ENCODE measurements at regions of chrX and their contacts with region 1.

Region 1: DNA sequence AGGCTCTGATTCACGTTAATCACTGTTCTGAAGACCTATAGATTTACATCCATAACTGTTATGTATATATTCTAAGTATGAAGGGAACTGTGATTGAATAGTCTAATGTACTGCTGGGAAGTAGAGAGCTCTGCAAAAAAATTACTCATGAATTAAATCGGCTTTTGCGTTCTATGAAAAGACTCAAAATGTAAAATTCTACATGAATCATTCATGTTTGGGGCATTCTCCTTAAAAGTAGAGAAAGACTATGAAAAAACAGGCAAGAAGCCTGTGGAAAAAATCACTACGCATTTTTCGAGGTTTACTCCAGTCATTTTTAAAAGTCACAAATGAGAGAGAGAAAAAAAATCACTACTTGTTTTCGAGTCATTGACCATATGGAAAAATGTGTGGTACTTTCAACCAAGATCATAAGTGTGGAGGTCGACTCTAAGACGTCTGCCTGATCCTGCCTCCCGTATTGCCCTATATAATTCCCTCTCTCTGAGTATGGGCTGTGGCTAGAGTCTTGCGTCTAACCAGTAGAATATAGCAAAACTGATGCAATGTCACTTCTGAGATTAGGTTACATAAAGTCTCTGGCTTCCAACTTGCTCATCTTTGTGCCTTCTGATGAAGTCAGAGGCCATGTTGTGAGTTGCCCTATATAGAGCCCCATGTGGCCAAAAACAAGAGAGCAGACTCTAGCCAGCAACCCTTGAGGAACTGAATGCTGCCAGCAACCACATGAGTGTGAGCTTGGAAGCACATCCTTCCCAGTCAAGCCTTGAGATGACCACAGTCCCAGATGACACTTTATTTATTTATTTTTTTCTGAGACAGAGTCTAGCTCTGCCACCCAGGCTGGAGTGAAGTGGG is 32.1 kb upstream of the VEGFD start:
- DNase-seq: no peak
- ATAC-seq: no peak
- H3K4me3 ChIP-seq: no peak overlapping the region
- H3K27ac ChIP-seq: no peak overlapping the region
- H3K4me1 ChIP-seq: 0 out of 2 replicates have a peak, but pooled peaks cover 2% of the 10 kb centered on the region
- H3K27me3 ChIP-seq: peaks cover 3% of the 10 kb centered on the region; the same call in 1 of the 2 replicates
- CTCF ChIP-seq: no peak
- POLR2A ChIP-seq: no peak
- RAD21 ChIP-seq: no peak

Region 2: GRCh38 chrX:15087747-15088146 is 328.6 kb before region 1 on chrX:
- CTCF ChIA-PET with region 1: no interaction called
- POLR2A ChIA-PET with region 1: no interaction called
- dilution Hi-C with region 1: no loop called
- in situ Hi-C with region 1: no loop called
- intact Hi-C with region 1: no loop called
- DNase-seq: no peak
- ATAC-seq: no peak
- H3K4me3 ChIP-seq: no peak overlapping the region
- H3K27ac ChIP-seq: no peak overlapping the region
- H3K4me1 ChIP-seq: no peaks in the 10 kb centered on the region
- H3K27me3 ChIP-seq: no peaks in the 10 kb centered on the region
- CTCF ChIP-seq: no peak
- POLR2A ChIP-seq: no peak
- RAD21 ChIP-seq: no peak

Region 3: DNA sequence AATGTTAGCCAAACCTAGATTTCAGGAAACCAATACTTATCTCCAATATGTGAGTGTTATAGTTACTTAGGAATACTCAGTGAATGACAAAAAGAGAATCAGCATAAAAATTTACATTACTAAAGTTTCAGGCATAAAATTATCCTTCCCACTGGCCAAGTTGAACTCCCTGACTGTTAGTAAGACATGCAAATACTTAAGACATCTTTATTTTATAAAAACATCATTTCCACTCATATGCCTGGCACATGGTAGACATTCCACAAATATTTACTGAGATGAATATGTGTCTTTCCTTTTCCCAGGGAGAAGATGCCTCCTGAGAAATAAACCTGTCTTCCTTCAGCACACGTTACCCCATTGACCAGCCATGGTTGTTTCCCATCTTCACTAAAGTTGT is 39.4 kb before region 1 on chrX:
- CTCF ChIA-PET with region 1: no interaction called
- POLR2A ChIA-PET with region 1: no interaction called
- dilution Hi-C with region 1: no loop called
- in situ Hi-C with region 1: no loop called
- intact Hi-C with region 1: no loop called
- DNase-seq: peak; percentile 25
- ATAC-seq: peak; percentile 64
- H3K4me3 ChIP-seq: no peak overlapping the region
- H3K27ac ChIP-seq: no peak overlapping the region
- H3K4me1 ChIP-seq: peaks cover 1% of the 10 kb centered on the region; the same call in 1 of the 2 replicates
- H3K27me3 ChIP-seq: no peaks in the 10 kb centered on the region; the same call in 1 of the 2 replicates
- CTCF ChIP-seq: no peak
- POLR2A ChIP-seq: no peak
- RAD21 ChIP-seq: no peak

Region 4: DNA sequence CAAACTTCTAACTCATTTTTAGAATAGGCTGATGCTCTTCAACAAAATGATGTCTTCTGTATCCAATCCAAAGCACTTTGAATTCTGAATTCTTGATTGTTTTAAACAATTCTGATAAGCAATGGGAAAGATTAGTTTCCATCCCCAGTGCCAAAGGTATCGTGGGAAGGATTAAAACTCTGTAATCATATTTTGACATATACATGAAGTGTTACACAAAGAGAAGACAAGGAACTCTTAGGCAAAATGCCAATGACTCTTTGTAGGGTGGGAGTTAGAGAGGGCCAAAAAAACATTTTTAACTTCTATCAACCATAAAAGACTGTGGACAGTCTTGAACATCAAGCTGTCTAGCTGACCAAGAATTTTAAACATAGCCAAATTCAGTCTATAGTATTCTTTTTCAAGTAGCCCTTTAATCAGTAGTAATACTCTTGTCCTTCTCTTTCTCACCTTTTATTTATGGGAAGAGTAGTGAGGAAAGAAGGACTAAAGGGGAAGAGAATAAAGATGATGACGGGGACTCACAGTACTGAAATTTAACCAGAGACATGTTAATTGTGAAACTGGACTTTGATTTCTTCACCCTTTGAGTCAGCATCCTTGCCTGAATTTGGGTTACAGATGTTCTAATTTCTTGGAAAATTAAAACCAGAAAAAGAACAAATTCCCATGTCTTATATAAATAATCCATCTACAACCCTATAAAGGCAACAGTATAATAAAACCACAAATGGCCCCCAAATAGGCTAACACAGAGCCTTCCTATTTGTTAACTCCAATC is 19.7 kb after region 1 on chrX:
- CTCF ChIA-PET with region 1: interaction called, 3 read pairs
- POLR2A ChIA-PET with region 1: interaction called, 12 read pairs
- dilution Hi-C with region 1: no loop called
- in situ Hi-C with region 1: no loop called
- intact Hi-C with region 1: no loop called
- DNase-seq: peak; percentile 11
- ATAC-seq: no peak
- H3K4me3 ChIP-seq: no peak overlapping the region
- H3K27ac ChIP-seq: no peak overlapping the region
- H3K4me1 ChIP-seq: no peaks in the 10 kb centered on the region
- H3K27me3 ChIP-seq: no peaks in the 10 kb centered on the region; the same call in 1 of the 2 replicates
- CTCF ChIP-seq: no peak
- POLR2A ChIP-seq: no peak
- RAD21 ChIP-seq: no peak

Region 5: DNA sequence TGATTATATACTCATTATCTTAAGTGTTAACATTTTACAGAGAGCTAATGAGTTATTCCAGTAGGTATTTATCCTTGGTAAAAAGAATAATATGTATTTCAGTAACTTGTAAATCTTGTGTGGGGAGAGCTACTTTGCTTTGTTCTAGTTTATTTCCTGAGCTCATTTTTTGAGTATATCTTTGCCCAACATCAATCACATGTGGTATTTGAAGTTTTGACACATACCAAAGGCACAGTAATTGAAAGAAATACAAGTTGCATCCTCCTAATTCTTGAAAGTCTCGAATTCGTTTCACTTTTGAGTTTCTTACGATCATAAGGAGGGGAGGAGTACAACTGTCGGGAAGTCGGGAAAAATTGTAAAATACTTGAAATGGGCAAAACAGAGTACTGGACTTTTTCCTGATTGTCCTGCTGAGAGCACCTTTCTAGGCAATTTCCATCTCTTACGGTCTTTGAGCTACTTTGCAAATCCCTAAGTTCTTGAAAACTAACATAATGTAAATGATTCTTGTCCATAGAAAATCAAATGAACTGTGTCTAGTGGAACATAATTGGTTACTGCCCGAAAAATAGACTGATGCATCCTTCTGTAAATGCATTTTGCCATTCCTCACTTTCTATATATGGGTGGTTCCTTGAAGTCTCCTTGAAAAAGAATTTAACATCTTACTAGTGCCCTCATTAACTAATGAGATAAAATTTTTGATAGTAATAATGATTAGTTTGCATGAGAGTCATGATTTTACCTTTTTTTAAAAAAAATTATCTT is 227.6 kb after region 1 on chrX:
- CTCF ChIA-PET with region 1: no interaction called
- POLR2A ChIA-PET with region 1: no interaction called
- dilution Hi-C with region 1: no loop called
- in situ Hi-C with region 1: no loop called
- intact Hi-C with region 1: no loop called
- DNase-seq: no peak
- ATAC-seq: no peak
- H3K4me3 ChIP-seq: no peak overlapping the region
- H3K27ac ChIP-seq: no peak overlapping the region
- H3K4me1 ChIP-seq: no peaks in the 10 kb centered on the region
- H3K27me3 ChIP-seq: peaks cover 9% of the 10 kb centered on the region
- CTCF ChIP-seq: no peak
- POLR2A ChIP-seq: no peak
- RAD21 ChIP-seq: no peak

Region 6: GRCh38 chrX:15749642-15750610 is 333.6 kb after region 1 on chrX:
- CTCF ChIA-PET with region 1: no interaction called
- POLR2A ChIA-PET with region 1: no interaction called
- dilution Hi-C with region 1: no loop called
- in situ Hi-C with region 1: no loop called
- intact Hi-C with region 1: no loop called
- DNase-seq: peak; percentile 6
- ATAC-seq: peak; percentile 31
- H3K4me3 ChIP-seq: no peak overlapping the region
- H3K27ac ChIP-seq: no peak overlapping the region
- H3K4me1 ChIP-seq: peaks cover 13% of the 10 kb centered on the region
- H3K27me3 ChIP-seq: no peaks in the 10 kb centered on the region
- CTCF ChIP-seq: no peak
- POLR2A ChIP-seq: no peak
- RAD21 ChIP-seq: no peak